ENCODE measurements at regions of chr20 and their contacts with region 1.

Region 1: DNA sequence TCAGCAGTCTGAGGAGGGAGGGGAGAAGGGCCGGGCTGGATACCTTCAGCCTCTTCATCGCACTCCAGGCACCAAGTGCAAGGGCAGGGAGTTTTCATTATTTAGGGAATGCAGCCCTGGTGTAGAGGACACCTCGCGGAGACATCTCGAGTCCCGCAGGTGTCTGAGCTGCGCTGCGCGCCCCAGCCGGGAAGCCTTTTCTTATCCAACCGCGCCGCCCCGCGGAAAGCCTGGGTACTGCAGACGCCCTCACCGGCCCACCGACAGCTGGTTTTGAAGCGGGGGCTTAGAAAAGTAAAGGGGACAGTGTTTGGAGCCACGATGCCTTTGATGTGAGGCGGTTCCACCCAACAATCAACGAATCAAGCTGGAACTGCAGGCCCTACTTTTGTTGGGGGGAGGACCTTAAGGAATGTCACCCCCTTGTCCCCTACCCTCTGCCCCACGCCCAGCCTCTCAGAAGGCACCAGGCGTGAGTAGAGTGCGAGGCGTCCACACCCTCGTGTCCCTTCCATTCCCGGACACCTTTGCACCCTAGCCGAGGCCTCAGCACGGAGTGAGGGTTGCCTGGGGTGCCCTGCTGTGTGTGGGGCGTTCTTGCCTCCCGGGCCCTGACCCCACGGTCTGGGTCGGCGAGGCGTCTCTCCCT is 8.6 kb downstream of the NKX2-2 start:
- DNase-seq: peak; percentile 61 to 88 (median 73)
- ATAC-seq: peak; percentile 83
- H3K4me3 ChIP-seq: peak overlapping the region; percentile 6 to 49
- H3K4me3 Mint-ChIP-seq: peak overlapping the region; percentile 61
- H3K27ac ChIP-seq: no peak overlapping the region
- H3K27ac Mint-ChIP-seq: no peak overlapping the region
- H3K4me1 ChIP-seq: peaks cover 26% of the 10 kb centered on the region
- H3K4me1 Mint-ChIP-seq: peaks cover 18% of the 10 kb centered on the region
- H3K27me3 ChIP-seq: peaks cover 22 to 30% of the 10 kb centered on the region in 2 experiments
- H3K27me3 Mint-ChIP-seq: peaks cover 51% of the 10 kb centered on the region
- CTCF ChIP-seq: peak; percentile 99

Region 2: GRCh38 chr20:20837574-20838021 is 667.7 kb before region 1 on chr20:
- CTCF ChIA-PET with region 1: interaction called, 3 read pairs
- POLR2A ChIA-PET with region 1: no interaction called
- intact Hi-C with region 1: loop called (anchors 1 to 5 kb)
- DNase-seq: peak in 4 of 9 experiments; percentile 17 to 28 (median 19)
- ATAC-seq: no peak
- H3K4me3 ChIP-seq: no peak overlapping the region
- H3K4me3 Mint-ChIP-seq: no peak overlapping the region
- H3K27ac ChIP-seq: no peak overlapping the region
- H3K27ac Mint-ChIP-seq: no peak overlapping the region
- H3K4me1 ChIP-seq: no peaks in the 10 kb centered on the region
- H3K4me1 Mint-ChIP-seq: peaks cover 3% of the 10 kb centered on the region
- H3K27me3 ChIP-seq: no peaks in the 10 kb centered on the region
- H3K27me3 Mint-ChIP-seq: peaks cover 16% of the 10 kb centered on the region
- CTCF ChIP-seq: peak; percentile 31

Region 3: GRCh38 chr20:21048841-21049273 is 456.4 kb before region 1 on chr20:
- CTCF ChIA-PET with region 1: interaction called, 8 read pairs
- POLR2A ChIA-PET with region 1: no interaction called
- intact Hi-C with region 1: loop called (anchors 2 kb)
- DNase-seq: peak; percentile 11 to 63 (median 52)
- ATAC-seq: peak; percentile 46
- H3K4me3 ChIP-seq: no peak overlapping the region
- H3K4me3 Mint-ChIP-seq: no peak overlapping the region
- H3K27ac ChIP-seq: no peak overlapping the region
- H3K27ac Mint-ChIP-seq: no peak overlapping the region
- H3K4me1 ChIP-seq: no peaks in the 10 kb centered on the region
- H3K4me1 Mint-ChIP-seq: no peaks in the 10 kb centered on the region
- H3K27me3 ChIP-seq: peaks cover 0 to 7% of the 10 kb centered on the region in 2 experiments
- H3K27me3 Mint-ChIP-seq: peaks cover 18% of the 10 kb centered on the region
- CTCF ChIP-seq: peak; percentile 65

Region 4: GRCh38 chr20:21235484-21236445 is 269.5 kb before region 1 on chr20:
- CTCF ChIA-PET with region 1: interaction called, 205 read pairs
- POLR2A ChIA-PET with region 1: interaction called, 7 read pairs
- intact Hi-C with region 1: loop called in 1 of 2 experiments (anchors 1 kb)
- DNase-seq: peak; percentile 18 to 70 (median 63)
- ATAC-seq: peak; percentile 68
- H3K4me3 ChIP-seq: no peak overlapping the region
- H3K4me3 Mint-ChIP-seq: no peak overlapping the region
- H3K27ac ChIP-seq: no peak overlapping the region
- H3K27ac Mint-ChIP-seq: no peak overlapping the region
- H3K4me1 ChIP-seq: no peaks in the 10 kb centered on the region
- H3K4me1 Mint-ChIP-seq: peaks cover 4% of the 10 kb centered on the region
- H3K27me3 ChIP-seq: no peaks in the 10 kb centered on the region
- H3K27me3 Mint-ChIP-seq: no peaks in the 10 kb centered on the region
- CTCF ChIP-seq: peak; percentile 94

Region 5: GRCh38 chr20:21373436-21373835 is 131.8 kb before region 1 on chr20:
- CTCF ChIA-PET with region 1: no interaction called
- POLR2A ChIA-PET with region 1: no interaction called
- intact Hi-C with region 1: no loop called
- DNase-seq: no peak
- ATAC-seq: no peak
- H3K4me3 ChIP-seq: no peak overlapping the region
- H3K4me3 Mint-ChIP-seq: no peak overlapping the region
- H3K27ac ChIP-seq: no peak overlapping the region
- H3K27ac Mint-ChIP-seq: no peak overlapping the region
- H3K4me1 ChIP-seq: no peaks in the 10 kb centered on the region
- H3K4me1 Mint-ChIP-seq: peaks cover 2% of the 10 kb centered on the region
- H3K27me3 ChIP-seq: no peaks in the 10 kb centered on the region
- H3K27me3 Mint-ChIP-seq: no peaks in the 10 kb centered on the region
- CTCF ChIP-seq: no peak

Region 6: DNA sequence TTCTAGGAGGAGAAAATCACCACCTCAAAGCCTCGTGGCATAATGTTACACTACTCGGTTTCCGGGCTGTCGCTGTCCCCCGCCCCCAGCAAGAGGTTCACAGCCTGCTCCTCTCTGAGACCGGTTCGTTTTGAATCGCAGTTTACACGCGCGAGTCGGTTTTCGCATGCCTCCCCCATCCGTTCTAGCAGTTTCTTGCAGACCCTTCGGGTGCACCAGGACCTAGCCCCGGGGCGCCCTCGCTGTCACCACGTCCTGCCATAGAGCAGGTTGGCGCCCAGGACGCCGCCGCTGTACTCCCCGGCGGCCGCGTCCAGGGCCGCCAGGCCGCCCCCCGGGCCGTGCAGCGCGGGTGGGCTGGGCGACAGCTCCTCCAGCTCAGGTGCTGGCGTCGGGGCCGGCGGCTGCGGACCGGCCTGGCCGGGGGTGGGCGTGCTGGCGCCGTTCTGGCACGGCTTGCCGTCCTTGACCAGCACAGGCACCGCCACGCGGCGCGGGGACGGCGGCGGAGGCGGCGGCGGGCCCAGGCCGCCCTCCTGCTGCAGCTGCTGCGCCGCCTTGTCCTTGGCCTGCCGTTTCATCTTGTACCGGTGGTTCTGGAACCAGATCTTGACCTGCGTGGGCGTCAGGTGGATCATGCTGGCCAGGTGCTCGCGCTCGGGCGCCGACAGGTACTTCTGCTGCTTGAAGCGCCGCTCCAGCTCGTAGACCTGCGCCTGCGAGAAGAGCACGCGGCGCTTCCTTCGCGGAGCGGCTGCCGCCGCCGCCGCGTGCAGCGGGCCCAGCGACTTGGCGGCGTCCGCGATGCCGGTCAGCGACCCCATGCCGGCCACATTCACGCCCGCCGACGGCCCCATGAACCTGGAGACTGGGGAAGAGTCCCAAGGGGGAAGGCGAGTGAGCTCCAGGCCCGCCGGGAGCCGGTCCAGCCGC is 109.4 kb before region 1 on chr20:
- CTCF ChIA-PET with region 1: no interaction called
- POLR2A ChIA-PET with region 1: no interaction called
- intact Hi-C with region 1: loop called in 1 of 2 experiments (anchors 5 kb)
- DNase-seq: peak in 8 of 9 experiments; percentile 11 to 86 (median 64)
- ATAC-seq: peak; percentile 89
- H3K4me3 ChIP-seq: no peak overlapping the region
- H3K4me3 Mint-ChIP-seq: peak overlapping the region; percentile 79
- H3K27ac ChIP-seq: no peak overlapping the region
- H3K27ac Mint-ChIP-seq: no peak overlapping the region
- H3K4me1 ChIP-seq: peaks cover 13% of the 10 kb centered on the region
- H3K4me1 Mint-ChIP-seq: peaks cover 23% of the 10 kb centered on the region
- H3K27me3 ChIP-seq: peaks cover 54 to 58% of the 10 kb centered on the region in 2 experiments
- H3K27me3 Mint-ChIP-seq: peaks cover 71% of the 10 kb centered on the region
- CTCF ChIP-seq: no peak

Region 7: GRCh38 chr20:21518292-21518991 is 13.2 kb after region 1 on chr20:
- CTCF ChIA-PET with region 1: interaction called, 13 read pairs
- POLR2A ChIA-PET with region 1: no interaction called
- intact Hi-C with region 1: no loop called
- DNase-seq: peak in 1 of 9 experiments; percentile 7
- ATAC-seq: no peak
- H3K4me3 ChIP-seq: no peak overlapping the region
- H3K4me3 Mint-ChIP-seq: no peak overlapping the region
- H3K27ac ChIP-seq: no peak overlapping the region
- H3K27ac Mint-ChIP-seq: no peak overlapping the region
- H3K4me1 ChIP-seq: peaks cover 42% of the 10 kb centered on the region
- H3K4me1 Mint-ChIP-seq: peaks cover 35% of the 10 kb centered on the region
- H3K27me3 ChIP-seq: peaks cover 23 to 38% of the 10 kb centered on the region in 2 experiments
- H3K27me3 Mint-ChIP-seq: peaks cover 66% of the 10 kb centered on the region
- CTCF ChIP-seq: no peak

Region 8: DNA sequence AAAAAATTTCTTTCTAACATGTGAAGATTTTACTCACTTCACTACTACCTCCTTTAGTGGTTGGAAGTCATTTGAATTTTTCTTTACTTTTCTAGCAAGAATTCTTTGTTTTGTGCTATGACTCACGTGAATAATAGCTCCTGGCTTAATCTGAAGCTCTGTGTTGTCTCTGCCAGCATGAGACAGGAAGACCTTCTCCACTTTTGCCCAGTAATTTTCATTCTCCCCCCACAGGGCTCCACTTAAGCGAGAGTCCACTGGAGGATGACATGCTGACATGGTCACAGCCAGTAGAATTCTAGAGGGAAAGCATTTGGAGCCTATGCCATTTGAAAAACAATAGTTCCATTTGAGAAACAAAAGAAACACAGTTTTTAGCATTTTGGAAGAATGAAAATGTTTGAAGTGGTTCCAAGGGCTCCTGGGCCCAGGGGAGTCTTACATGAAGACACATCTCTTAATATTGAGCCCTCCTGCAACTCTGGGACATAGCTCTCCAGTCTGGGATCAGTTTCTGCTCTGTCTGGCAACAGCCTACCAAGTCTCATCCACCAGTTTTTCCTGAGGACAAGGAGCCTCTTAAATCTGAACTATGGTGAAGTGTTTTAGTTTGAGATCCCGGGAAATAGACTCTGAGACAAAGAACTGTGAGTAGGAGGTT is 431.6 kb after region 1 on chr20:
- CTCF ChIA-PET with region 1: no interaction called
- POLR2A ChIA-PET with region 1: no interaction called
- intact Hi-C with region 1: no loop called
- DNase-seq: no peak
- ATAC-seq: no peak
- H3K4me3 ChIP-seq: no peak overlapping the region
- H3K4me3 Mint-ChIP-seq: no peak overlapping the region
- H3K27ac ChIP-seq: no peak overlapping the region
- H3K27ac Mint-ChIP-seq: no peak overlapping the region
- H3K4me1 ChIP-seq: no peaks in the 10 kb centered on the region
- H3K4me1 Mint-ChIP-seq: no peaks in the 10 kb centered on the region
- H3K27me3 ChIP-seq: no peaks in the 10 kb centered on the region
- H3K27me3 Mint-ChIP-seq: no peaks in the 10 kb centered on the region
- CTCF ChIP-seq: no peak